ENCODE measurements at regions of chr11 and their contacts with region 1.

Region 1: GRCh38 chr11:75142714-75143419 is 8.0 kb upstream of the SLCO2B1 start:
- DNase-seq: no peak
- ATAC-seq: peak; percentile 60
- H3K4me3 Mint-ChIP-seq: no peak overlapping the region
- H3K27ac Mint-ChIP-seq: no peak overlapping the region
- H3K4me1 Mint-ChIP-seq: peaks cover 8% of the 10 kb centered on the region
- H3K27me3 Mint-ChIP-seq: peaks cover 6% of the 10 kb centered on the region
- CTCF ChIP-seq: no peak

Region 2: GRCh38 chr11:75096456-75097172 is 46.3 kb before region 1 on chr11 and contains the start of gene OR2AT4:
- CTCF ChIA-PET with region 1: interaction called, 10 read pairs
- POLR2A ChIA-PET with region 1: no interaction called
- DNase-seq: no peak
- ATAC-seq: no peak
- H3K4me3 Mint-ChIP-seq: no peak within 1 kb of the TSS
- H3K27ac Mint-ChIP-seq: no peak within 1 kb of the TSS
- H3K4me1 Mint-ChIP-seq: peaks cover 9% of the 10 kb centered on the region
- H3K27me3 Mint-ChIP-seq: peaks cover 12% of the 10 kb centered on the region; the same call in 1 of the 2 replicates
- CTCF ChIP-seq: no peak
- total RNA-seq, gene OR2AT4: 0.02 TPM in 1 of 3 replicates, not detected in the others

Region 3: GRCh38 chr11:75182669-75183068 is 39.8 kb after region 1 on chr11:
- CTCF ChIA-PET with region 1: interaction called, 11 read pairs
- POLR2A ChIA-PET with region 1: no interaction called
- DNase-seq: no peak
- ATAC-seq: no peak
- H3K4me3 Mint-ChIP-seq: no peak overlapping the region
- H3K27ac Mint-ChIP-seq: no peak overlapping the region
- H3K4me1 Mint-ChIP-seq: peaks cover 15% of the 10 kb centered on the region
- H3K27me3 Mint-ChIP-seq: no peaks in the 10 kb centered on the region
- CTCF ChIP-seq: no peak

Region 4: GRCh38 chr11:75214411-75214821 is 71.5 kb after region 1 on chr11:
- CTCF ChIA-PET with region 1: interaction called, 590 read pairs
- POLR2A ChIA-PET with region 1: no interaction called
- DNase-seq: peak; percentile 97
- ATAC-seq: peak; percentile 99
- H3K4me3 Mint-ChIP-seq: no peak overlapping the region
- H3K27ac Mint-ChIP-seq: no peak overlapping the region
- H3K4me1 Mint-ChIP-seq: no peaks in the 10 kb centered on the region
- H3K27me3 Mint-ChIP-seq: peaks cover 53% of the 10 kb centered on the region
- CTCF ChIP-seq: no peak

Region 5: GRCh38 chr11:75241036-75241905 is 98.4 kb after region 1 on chr11:
- CTCF ChIA-PET with region 1: interaction called, 191 read pairs
- POLR2A ChIA-PET with region 1: interaction called, 3 read pairs
- DNase-seq: peak; percentile 89
- ATAC-seq: peak; percentile 74
- H3K4me3 Mint-ChIP-seq: peak overlapping the region; percentile 53
- H3K27ac Mint-ChIP-seq: no peak overlapping the region
- H3K4me1 Mint-ChIP-seq: peaks cover 19% of the 10 kb centered on the region
- H3K27me3 Mint-ChIP-seq: peaks cover 75% of the 10 kb centered on the region
- CTCF ChIP-seq: peak; percentile 90

Region 6: GRCh38 chr11:75432164-75432525 is 289.3 kb after region 1 on chr11:
- CTCF ChIA-PET with region 1: no interaction called
- POLR2A ChIA-PET with region 1: no interaction called
- DNase-seq: peak; percentile 36
- ATAC-seq: 0 out of 2 replicates have a peak, but pooled peaks have one; percentile 3
- H3K4me3 Mint-ChIP-seq: peak overlapping the region; percentile 51
- H3K27ac Mint-ChIP-seq: no peak overlapping the region
- H3K4me1 Mint-ChIP-seq: peaks cover 30% of the 10 kb centered on the region
- H3K27me3 Mint-ChIP-seq: peaks cover 63% of the 10 kb centered on the region
- CTCF ChIP-seq: no peak